Right ventricle myocardium inferior (tissue), 1 donor: ENCODE measurements at regions of chr6 and their contacts with region 1.

Region 1: DNA sequence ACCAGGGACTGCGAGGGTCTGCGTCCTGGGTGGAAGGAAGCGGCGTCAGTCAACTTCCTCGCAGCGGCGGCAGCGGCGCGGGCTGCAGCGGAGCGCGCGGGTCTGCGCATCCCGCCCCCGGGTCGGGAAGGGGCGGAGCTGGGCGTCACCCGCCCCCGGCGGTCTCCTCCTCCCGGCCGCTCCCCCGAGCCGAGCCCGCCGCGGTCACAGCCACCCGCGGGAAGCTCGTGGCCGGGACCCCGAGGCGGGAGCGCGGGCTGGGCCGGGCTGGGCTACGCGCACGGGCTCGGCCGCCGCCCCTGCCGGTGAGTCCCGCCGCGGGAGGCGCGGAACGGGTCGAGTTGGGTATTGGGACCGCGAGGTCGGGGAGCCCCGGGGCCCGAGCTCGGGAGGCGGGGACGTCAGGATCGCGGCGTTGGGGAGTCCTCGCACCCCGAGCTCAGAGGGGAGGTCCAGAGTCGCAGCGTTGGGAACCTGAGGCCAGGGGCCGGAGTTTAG is at the start of gene PAQR8:
- DNase-seq: peak; percentile 90
- ATAC-seq: peak; percentile 98
- total RNA-seq, gene PAQR8: 1.9 TPM

Region 2: DNA sequence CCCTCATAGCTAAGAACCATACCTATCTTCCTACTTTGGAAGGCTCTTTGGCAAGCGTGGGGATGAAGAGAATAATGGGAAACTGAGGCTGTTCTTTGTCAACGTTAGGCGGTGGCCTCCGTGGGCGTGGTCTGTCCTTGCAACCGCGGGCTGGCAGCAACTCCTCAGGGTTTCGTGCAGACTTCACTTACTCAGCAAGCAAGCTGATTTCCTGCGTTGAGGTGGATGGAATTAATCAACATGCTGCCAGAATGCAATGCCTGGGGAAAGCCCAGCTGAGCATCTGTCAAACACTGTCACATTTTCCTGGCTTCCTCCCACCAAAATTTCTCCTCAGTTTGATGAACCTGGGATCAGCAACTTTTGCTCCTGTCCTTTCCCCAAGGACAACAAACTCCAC is 108.5 kb before region 1 on chr6:
- intact Hi-C with region 1: no loop called
- DNase-seq: no peak
- ATAC-seq: no peak

Region 3: DNA sequence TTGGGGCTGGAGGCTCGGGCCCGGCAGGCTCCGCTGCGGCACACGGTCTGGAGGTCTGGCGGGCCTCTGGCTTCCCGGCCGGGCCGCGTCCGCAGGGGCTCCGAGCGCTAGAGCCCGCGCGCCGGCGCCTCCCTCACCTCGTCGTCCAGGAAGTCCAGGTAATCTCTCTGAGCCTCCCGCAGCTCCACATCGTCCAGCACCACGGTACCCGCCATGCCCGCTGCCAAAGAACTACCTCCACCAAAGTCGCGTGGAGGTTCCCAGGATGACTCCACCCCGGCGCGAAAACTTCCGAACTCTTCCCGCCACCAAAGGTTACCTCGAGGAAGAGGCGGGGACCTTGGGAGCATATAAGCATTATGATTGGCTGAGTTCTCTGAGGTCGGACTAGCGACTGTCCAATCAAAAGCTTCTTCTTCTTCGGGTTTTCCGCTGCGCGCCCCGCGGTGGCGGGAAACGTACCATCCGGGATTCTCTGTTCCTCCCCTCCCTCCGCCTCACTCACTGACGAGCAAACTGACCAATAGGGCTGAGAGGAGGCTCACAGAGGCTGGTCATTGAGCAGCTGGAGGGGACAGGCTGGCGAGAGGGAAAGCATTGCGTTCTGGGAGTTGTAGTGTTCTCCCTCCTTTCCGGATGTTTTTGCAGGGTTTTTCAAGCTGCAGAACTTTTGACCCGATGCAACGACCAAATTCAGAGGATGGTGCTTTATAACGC is 77.4 kb before region 1 on chr6 and contains the start of gene MCM3:
- intact Hi-C with region 1: loop called (anchors 5 kb)
- DNase-seq: peak; percentile 97
- ATAC-seq: peak; percentile 100
- total RNA-seq, gene MCM3: 21.7 TPM